ENCODE measurements at regions of chr5 and their contacts with region 1.

Region 1: GRCh38 chr5:141564216-141564692 is 54.5 kb downstream of the DIAPH1 start:
- DNase-seq: peak; percentile 67
- H3K4me3 Mint-ChIP-seq: no peak overlapping the region
- H3K27ac Mint-ChIP-seq: peak overlapping the region; percentile 70
- H3K4me1 Mint-ChIP-seq: peaks cover 34% of the 10 kb centered on the region
- H3K27me3 Mint-ChIP-seq: no peaks in the 10 kb centered on the region

Region 2: GRCh38 chr5:141320225-141321169 is 243.8 kb before region 1 on chr5 and contains the start of gene TAF7:
- CTCF ChIA-PET with region 1: interaction called, 28 read pairs
- POLR2A ChIA-PET with region 1: interaction called, 14 read pairs
- intact Hi-C with region 1: loop called (anchors 1 kb)
- DNase-seq: peak; percentile 95
- H3K4me3 Mint-ChIP-seq: peak within 1 kb of the TSS; percentile 98
- H3K27ac Mint-ChIP-seq: peak within 1 kb of the TSS; percentile 99
- H3K4me1 Mint-ChIP-seq: peaks cover 23% of the 10 kb centered on the region
- H3K27me3 Mint-ChIP-seq: no peaks in the 10 kb centered on the region
- total RNA-seq, gene TAF7: 54.6 to 55.5 TPM

Region 3: GRCh38 chr5:141412854-141413539 is 151.3 kb before region 1 on chr5 and contains the start of gene PCDHGA10:
- CTCF ChIA-PET with region 1: interaction called, 33 read pairs
- POLR2A ChIA-PET with region 1: no interaction called
- intact Hi-C with region 1: loop called (anchors 1 kb)
- DNase-seq: peak; percentile 69
- H3K4me3 Mint-ChIP-seq: peak within 1 kb of the TSS; percentile 66
- H3K27ac Mint-ChIP-seq: no peak within 1 kb of the TSS
- H3K4me1 Mint-ChIP-seq: peaks cover 18% of the 10 kb centered on the region
- H3K27me3 Mint-ChIP-seq: peaks cover 61% of the 10 kb centered on the region
- total RNA-seq, gene PCDHGA10: 0.07 to 0.10 TPM

Region 4: GRCh38 chr5:141437221-141437620 is 127.0 kb before region 1 on chr5:
- CTCF ChIA-PET with region 1: no interaction called
- POLR2A ChIA-PET with region 1: no interaction called
- intact Hi-C with region 1: no loop called
- DNase-seq: no peak
- H3K4me3 Mint-ChIP-seq: no peak overlapping the region
- H3K27ac Mint-ChIP-seq: no peak overlapping the region
- H3K4me1 Mint-ChIP-seq: no peaks in the 10 kb centered on the region
- H3K27me3 Mint-ChIP-seq: peaks cover 21% of the 10 kb centered on the region

Region 5: DNA sequence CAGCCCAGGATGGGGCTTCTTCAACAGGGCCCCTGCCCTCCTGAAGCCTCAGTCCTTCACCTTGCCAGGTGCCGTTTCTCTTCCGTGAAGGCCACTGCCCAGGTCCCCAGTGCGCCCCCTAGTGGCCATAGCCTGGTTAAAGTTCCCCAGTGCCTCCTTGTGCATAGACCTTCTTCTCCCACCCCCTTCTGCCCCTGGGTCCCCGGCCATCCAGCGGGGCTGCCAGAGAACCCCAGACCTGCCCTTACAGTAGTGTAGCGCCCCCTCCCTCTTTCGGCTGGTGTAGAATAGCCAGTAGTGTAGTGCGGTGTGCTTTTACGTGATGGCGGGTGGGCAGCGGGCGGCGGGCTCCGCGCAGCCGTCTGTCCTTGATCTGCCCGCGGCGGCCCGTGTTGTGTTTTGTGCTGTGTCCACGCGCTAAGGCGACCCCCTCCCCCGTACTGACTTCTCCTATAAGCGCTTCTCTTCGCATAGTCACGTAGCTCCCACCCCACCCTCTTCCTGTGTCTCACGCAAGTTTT is 51.8 kb before region 1 on chr5:
- CTCF ChIA-PET with region 1: interaction called, 26 read pairs
- POLR2A ChIA-PET with region 1: no interaction called
- intact Hi-C with region 1: loop called (anchors 2 kb)
- DNase-seq: peak; percentile 91
- H3K4me3 Mint-ChIP-seq: peak overlapping the region; percentile 71
- H3K27ac Mint-ChIP-seq: no peak overlapping the region
- H3K4me1 Mint-ChIP-seq: peaks cover 30% of the 10 kb centered on the region
- H3K27me3 Mint-ChIP-seq: no peaks in the 10 kb centered on the region

Region 6: DNA sequence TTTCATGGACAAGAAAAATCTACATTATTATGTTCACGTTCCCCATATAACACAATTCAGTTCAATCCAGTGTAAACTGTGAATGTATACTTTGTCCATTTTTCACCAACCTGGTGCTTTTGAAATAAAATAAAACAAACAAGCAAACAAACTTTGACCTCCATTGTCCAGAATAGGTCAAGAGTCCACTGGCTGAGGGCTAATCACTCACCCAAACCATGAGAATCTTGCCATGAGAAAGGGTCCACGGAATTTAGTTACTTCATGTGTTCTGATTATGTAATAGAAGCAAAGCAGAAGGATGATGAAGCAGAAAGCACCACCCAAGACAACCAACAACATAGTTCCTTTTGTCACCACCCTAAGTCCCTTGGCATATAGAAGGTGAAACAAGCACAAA is 25.9 kb after region 1 on chr5:
- CTCF ChIA-PET with region 1: interaction called, 25 read pairs
- POLR2A ChIA-PET with region 1: no interaction called
- intact Hi-C with region 1: no loop called
- DNase-seq: no peak
- H3K4me3 Mint-ChIP-seq: no peak overlapping the region
- H3K27ac Mint-ChIP-seq: no peak overlapping the region
- H3K4me1 Mint-ChIP-seq: peaks cover 39% of the 10 kb centered on the region
- H3K27me3 Mint-ChIP-seq: no peaks in the 10 kb centered on the region

Region 7: GRCh38 chr5:141618804-141619554 is 54.7 kb after region 1 on chr5 and contains the start of gene DIAPH1:
- CTCF ChIA-PET with region 1: interaction called, 48 read pairs
- POLR2A ChIA-PET with region 1: no interaction called
- intact Hi-C with region 1: loop called (anchors 1 kb)
- DNase-seq: peak; percentile 99
- H3K4me3 Mint-ChIP-seq: peak within 1 kb of the TSS; percentile 91
- H3K27ac Mint-ChIP-seq: peak within 1 kb of the TSS; percentile 98
- H3K4me1 Mint-ChIP-seq: peaks cover 57% of the 10 kb centered on the region
- H3K27me3 Mint-ChIP-seq: no peaks in the 10 kb centered on the region
- total RNA-seq, gene DIAPH1: 225 to 227 TPM

Region 8: DNA sequence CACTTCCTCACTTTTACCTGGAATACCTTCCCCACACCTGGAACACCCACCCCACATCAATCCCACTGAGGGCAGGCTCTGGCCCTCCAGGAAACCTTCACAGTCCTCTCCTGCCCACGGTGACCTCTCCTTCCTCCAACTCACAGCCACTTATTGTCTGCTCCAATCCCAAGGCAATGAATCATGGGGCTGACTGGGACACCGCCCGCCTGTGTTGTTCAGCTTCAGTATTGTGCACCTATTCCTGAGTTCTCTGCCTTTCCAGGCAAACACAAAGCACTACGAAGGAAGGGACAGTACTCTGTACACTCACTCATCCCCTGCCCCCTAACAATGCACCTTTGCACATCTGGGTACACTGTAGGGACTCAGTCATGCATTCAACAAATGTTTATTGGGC is 306.6 kb after region 1 on chr5:
- CTCF ChIA-PET with region 1: no interaction called
- POLR2A ChIA-PET with region 1: no interaction called
- intact Hi-C with region 1: no loop called
- DNase-seq: no peak
- H3K4me3 Mint-ChIP-seq: no peak overlapping the region
- H3K27ac Mint-ChIP-seq: no peak overlapping the region
- H3K4me1 Mint-ChIP-seq: peaks cover 4% of the 10 kb centered on the region
- H3K27me3 Mint-ChIP-seq: peaks cover 42% of the 10 kb centered on the region